ENCODE measurements at regions of chr7 and their contacts with region 1.

Region 1: GRCh38 chr7:107090457-107090856 is 46.0 kb downstream of the PRKAR2B start:
- DNase-seq: peak; percentile 98
- H3K4me3 ChIP-seq: peak overlapping the region; percentile 83
- H3K27ac ChIP-seq: peak overlapping the region; percentile 100
- H3K4me1 ChIP-seq: peaks cover 72% of the 10 kb centered on the region
- CTCF ChIP-seq: no peak; the same call in 1 of the 2 replicates

Region 2: DNA sequence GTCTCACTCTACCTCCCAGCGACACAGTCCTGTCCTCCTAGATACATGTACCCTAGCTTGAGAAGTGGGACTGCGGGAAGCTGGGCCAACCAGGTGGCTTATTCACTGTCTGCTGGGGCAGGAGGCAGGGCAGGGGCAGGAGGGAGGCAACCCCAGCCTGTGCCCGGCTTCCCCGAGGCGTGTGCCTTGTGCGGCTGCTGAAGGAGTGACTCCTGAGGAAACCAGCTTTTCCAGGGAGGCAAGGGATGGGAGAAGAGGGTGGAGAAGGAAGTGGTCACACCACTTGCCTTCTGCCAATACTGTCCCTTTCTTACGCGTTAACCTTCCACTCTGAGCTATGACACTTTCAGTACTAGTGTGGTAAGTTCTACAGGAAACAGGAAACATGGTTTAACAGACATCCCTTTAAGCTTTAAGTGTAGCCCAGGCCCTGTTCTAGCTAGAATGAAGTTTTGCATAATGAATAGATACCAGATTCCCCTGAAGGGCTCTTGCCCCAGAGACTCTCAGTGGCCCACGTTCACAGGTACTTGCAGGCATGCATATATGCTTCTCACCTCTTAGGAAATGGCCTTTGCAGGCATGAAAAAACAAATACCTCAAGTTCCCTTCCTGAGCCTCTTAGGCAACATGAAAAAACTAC is 1019.0 kb before region 1 on chr7:
- CTCF ChIA-PET with region 1: no interaction called
- POLR2A ChIA-PET with region 1: interaction called, 5 read pairs
- intact Hi-C with region 1: loop called (anchors 5 kb)
- DNase-seq: peak; percentile 96
- H3K4me3 ChIP-seq: peak overlapping the region; percentile 70
- H3K27ac ChIP-seq: peak overlapping the region; percentile 96
- H3K4me1 ChIP-seq: peaks cover 98% of the 10 kb centered on the region
- CTCF ChIP-seq: no peak

Region 3: GRCh38 chr7:106959753-106960152 is 130.7 kb before region 1 on chr7:
- CTCF ChIA-PET with region 1: no interaction called
- POLR2A ChIA-PET with region 1: interaction called, 4 read pairs
- intact Hi-C with region 1: loop called (anchors 2 kb)
- DNase-seq: peak; percentile 70
- H3K4me3 ChIP-seq: no peak overlapping the region
- H3K27ac ChIP-seq: no peak overlapping the region
- H3K4me1 ChIP-seq: peaks cover 64% of the 10 kb centered on the region
- CTCF ChIP-seq: peak; percentile 71

Region 4: GRCh38 chr7:107064255-107064654 is 26.2 kb before region 1 on chr7:
- CTCF ChIA-PET with region 1: interaction called, 4 read pairs
- POLR2A ChIA-PET with region 1: interaction called, 28 read pairs
- intact Hi-C with region 1: loop called (anchors 1 kb)
- DNase-seq: peak; percentile 56
- H3K4me3 ChIP-seq: peak overlapping the region; percentile 50
- H3K27ac ChIP-seq: peak overlapping the region; percentile 67
- H3K4me1 ChIP-seq: peaks cover 62% of the 10 kb centered on the region
- CTCF ChIP-seq: no peak

Region 5: DNA sequence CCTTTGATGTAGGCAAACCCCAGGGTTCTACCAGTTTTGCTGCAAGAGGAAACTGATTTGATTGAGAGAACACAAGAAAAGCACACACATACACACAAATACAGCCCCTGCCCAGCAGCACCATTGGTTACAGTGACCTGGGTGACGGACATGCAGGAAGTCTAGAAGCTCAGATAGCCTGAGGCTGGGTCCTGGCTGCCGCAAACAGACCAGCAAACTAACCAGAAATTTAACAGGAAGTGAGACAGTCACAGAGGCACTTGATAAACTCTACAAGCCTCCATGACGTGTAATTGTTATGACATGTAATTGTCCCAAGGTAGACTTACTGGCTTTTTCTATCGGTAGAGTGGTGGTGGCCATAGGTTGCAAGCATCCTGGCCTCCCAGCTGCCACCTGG is 12.9 kb after region 1 on chr7:
- CTCF ChIA-PET with region 1: interaction called, 4 read pairs
- POLR2A ChIA-PET with region 1: interaction called, 31 read pairs
- intact Hi-C with region 1: no loop called
- DNase-seq: peak; percentile 74
- H3K4me3 ChIP-seq: peak overlapping the region; percentile 13
- H3K27ac ChIP-seq: peak overlapping the region; percentile 50
- H3K4me1 ChIP-seq: peaks cover 61% of the 10 kb centered on the region
- CTCF ChIP-seq: no peak

Region 6: GRCh38 chr7:107168233-107169119 is 78.0 kb after region 1 on chr7 and contains the start of gene HBP1:
- CTCF ChIA-PET with region 1: no interaction called
- POLR2A ChIA-PET with region 1: interaction called, 7 read pairs
- intact Hi-C with region 1: loop called (anchors 5 kb)
- DNase-seq: peak; percentile 99
- H3K4me3 ChIP-seq: peak within 1 kb of the TSS; percentile 80
- H3K27ac ChIP-seq: peak within 1 kb of the TSS; percentile 70
- H3K4me1 ChIP-seq: peaks cover 11% of the 10 kb centered on the region
- CTCF ChIP-seq: no peak
- total RNA-seq, gene HBP1: 9.3 and 10.9 TPM in 2 replicates

Measured in OCI-LY7 (cell line).